ENCODE measurements at regions of chr17 and their contacts with region 1.

Region 1: DNA sequence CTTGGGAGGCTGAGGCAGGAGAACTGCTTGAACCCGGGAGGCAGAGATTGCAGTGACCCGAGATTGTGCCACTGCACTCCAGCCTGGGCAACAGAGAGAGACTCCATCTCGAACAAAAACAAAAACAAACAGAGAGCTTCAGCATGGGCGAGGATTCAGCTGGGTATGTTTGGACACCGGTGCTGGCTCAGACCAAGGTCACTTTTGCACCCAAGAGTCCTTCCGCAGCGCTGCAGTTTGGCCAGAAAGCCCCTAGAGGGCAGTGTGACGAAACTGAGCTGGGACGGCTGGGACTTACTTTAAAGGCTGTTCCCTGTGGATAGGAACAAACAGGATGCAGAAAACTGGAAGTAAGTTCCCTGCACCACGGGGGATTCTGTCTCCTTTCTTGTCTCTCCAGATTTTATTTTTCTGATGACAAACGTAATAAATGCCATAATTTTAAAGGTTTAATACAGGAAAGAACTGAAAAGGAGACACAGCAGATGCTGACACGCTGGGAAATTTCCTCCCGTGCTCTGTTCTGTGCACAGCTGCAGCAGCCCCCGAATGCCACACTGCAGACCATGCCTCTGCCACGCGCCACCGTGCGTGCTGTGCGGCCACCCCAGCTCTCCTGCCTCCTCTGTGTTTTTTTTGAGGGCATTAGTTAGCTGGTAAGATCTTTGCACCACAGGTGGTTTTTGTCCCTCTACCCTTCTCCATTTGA is 25.2 kb upstream of the USP36 start:
- DNase-seq: peak; percentile 80
- ATAC-seq: peak; percentile 48
- H3K4me3 ChIP-seq: no peak overlapping the region
- H3K27ac ChIP-seq: peak overlapping the region; percentile 21; the same call in 1 of the 2 replicates
- H3K4me1 ChIP-seq: peaks cover 18% of the 10 kb centered on the region
- H3K27me3 ChIP-seq: no peaks in the 10 kb centered on the region
- CTCF ChIP-seq: peak; percentile 81
- POLR2A ChIP-seq: no peak
- RAD21 ChIP-seq: peak; percentile 84

Region 2: GRCh38 chr17:78925234-78925633 is 59.4 kb after region 1 on chr17 and contains the start of gene TIMP2:
- CTCF ChIA-PET with region 1: interaction called, 5 read pairs
- POLR2A ChIA-PET with region 1: no interaction called
- dilution Hi-C with region 1: no loop called
- in situ Hi-C with region 1: no loop called
- intact Hi-C with region 1: loop called (anchors 2 kb)
- DNase-seq: peak; percentile 83
- ATAC-seq: peak; percentile 77
- H3K4me3 ChIP-seq: peak within 1 kb of the TSS; percentile 89
- H3K27ac ChIP-seq: peak within 1 kb of the TSS; percentile 90
- H3K4me1 ChIP-seq: peaks cover 22% of the 10 kb centered on the region
- H3K27me3 ChIP-seq: no peaks in the 10 kb centered on the region
- CTCF ChIP-seq: 0 out of 2 replicates have a peak, but pooled peaks have one; percentile 2
- POLR2A ChIP-seq: peak; percentile 95
- RAD21 ChIP-seq: peak; percentile 3; the same call in 1 of the 2 replicates
- total RNA-seq, gene TIMP2: 43.9 and 48.6 TPM in 2 replicates

Region 3: GRCh38 chr17:78933959-78934568 is 68.2 kb after region 1 on chr17:
- CTCF ChIA-PET with region 1: interaction called, 3 read pairs
- POLR2A ChIA-PET with region 1: no interaction called
- dilution Hi-C with region 1: no loop called
- in situ Hi-C with region 1: no loop called
- intact Hi-C with region 1: loop called (anchors 2 kb)
- DNase-seq: peak; percentile 100
- ATAC-seq: peak; percentile 66
- H3K4me3 ChIP-seq: peak overlapping the region; percentile 6; the same call in 1 of the 2 replicates
- H3K27ac ChIP-seq: peak overlapping the region; percentile 88
- H3K4me1 ChIP-seq: peaks cover 28% of the 10 kb centered on the region
- H3K27me3 ChIP-seq: no peaks in the 10 kb centered on the region
- CTCF ChIP-seq: no peak
- POLR2A ChIP-seq: peak; percentile 86
- RAD21 ChIP-seq: no peak; the same call in 1 of the 2 replicates

Region 4: GRCh38 chr17:78965491-78965948 is 99.7 kb after region 1 on chr17:
- CTCF ChIA-PET with region 1: no interaction called
- POLR2A ChIA-PET with region 1: no interaction called
- dilution Hi-C with region 1: no loop called
- in situ Hi-C with region 1: loop called (anchors 5 kb)
- intact Hi-C with region 1: no loop called
- DNase-seq: no peak
- ATAC-seq: no peak
- H3K4me3 ChIP-seq: no peak overlapping the region
- H3K27ac ChIP-seq: no peak overlapping the region
- H3K4me1 ChIP-seq: peaks cover 5% of the 10 kb centered on the region
- H3K27me3 ChIP-seq: no peaks in the 10 kb centered on the region
- CTCF ChIP-seq: no peak
- POLR2A ChIP-seq: no peak
- RAD21 ChIP-seq: no peak

Region 5: DNA sequence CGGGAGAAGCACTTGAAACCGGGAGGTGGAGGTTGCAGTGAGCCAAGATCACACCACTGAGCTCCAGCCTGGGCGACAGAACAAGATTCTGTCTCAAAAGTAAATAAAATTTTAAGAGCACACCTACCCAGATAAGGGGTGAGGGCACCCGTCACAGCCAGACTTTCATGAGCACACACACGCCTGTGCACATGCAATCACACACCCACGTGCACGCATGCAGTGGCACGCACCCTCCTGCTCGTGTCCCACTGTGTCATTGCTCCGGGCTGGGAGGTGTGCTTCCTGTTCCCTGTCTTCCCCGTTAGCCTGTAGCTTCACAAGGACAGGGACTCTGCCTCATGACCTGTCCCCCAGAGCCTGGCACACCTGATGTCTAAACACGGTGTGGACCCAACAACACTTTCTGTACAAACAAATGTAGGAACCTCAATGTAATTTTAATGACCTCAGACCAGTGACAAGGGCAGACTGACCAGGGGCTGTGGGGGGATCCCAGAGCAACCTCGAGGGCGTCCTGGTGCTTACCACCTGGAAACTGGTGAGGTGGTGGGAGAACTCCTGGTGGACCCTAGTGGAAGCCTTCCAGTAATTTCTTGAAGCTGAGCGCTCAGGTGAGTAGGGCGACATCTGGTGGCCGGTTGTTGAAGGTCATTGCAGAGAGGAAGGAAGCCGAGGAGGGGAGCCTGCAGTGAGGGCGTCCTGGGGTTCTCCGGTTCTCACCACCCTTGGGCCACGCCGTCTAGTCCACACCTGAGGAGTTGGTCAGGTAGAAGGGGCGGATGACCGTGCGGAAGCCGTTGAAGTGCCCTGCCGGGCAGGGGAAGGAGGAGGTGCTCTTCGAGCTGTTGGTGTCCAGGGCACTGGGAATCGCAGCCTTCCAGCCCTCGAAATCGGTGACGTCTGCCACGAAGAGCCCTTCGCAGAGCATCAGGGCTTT is 105.3 kb after region 1 on chr17:
- CTCF ChIA-PET with region 1: interaction called, 12 read pairs
- POLR2A ChIA-PET with region 1: no interaction called
- dilution Hi-C with region 1: no loop called
- in situ Hi-C with region 1: loop called (anchors 5 kb)
- intact Hi-C with region 1: loop called (anchors 1 kb)
- DNase-seq: peak; percentile 72
- ATAC-seq: peak; percentile 37
- H3K4me3 ChIP-seq: no peak overlapping the region
- H3K27ac ChIP-seq: no peak overlapping the region; the same call in 1 of the 2 replicates
- H3K4me1 ChIP-seq: peaks cover 19% of the 10 kb centered on the region
- H3K27me3 ChIP-seq: no peaks in the 10 kb centered on the region
- CTCF ChIP-seq: peak; percentile 90
- POLR2A ChIP-seq: no peak
- RAD21 ChIP-seq: peak; percentile 94

Measured in IMR-90 (cell line).